HAP-1 (cell line): ENCODE measurements at regions of chr11 and their contacts with region 1.

Region 1: DNA sequence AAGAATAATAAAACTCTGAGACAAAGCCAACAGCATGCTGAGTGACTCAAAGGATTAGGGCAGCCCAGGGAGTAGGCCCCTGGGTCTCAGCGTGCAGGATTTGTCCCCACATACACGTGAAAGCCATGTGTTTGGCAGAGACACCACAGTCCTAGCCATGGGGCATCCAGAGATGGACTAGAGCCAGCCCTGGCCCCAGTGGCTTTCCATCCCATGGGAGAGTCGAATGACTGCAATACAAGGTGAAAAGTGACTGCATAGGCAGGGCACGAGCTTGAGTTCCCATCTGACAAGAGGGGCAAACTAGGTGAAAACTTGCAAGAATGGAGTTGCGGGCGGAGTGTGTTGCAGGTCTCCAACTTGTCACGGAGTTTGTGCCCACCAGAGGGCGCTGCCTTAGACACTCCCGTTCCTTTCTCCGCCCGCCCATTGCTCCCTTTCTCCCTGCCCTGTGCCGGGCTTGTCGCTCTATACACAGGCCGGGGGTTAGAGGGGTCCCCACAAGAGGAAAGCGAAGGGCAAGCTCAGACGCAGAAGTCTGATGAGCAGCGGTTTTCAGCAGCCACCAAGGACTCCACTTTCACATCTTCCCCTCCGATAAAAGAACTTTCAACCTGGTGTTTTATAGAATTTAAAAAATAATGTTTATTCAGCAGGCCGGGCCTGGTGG is 24.2 kb downstream of the TSKU start:
- DNase-seq: peak; percentile 80 to 95
- H3K4me3 ChIP-seq: no peak overlapping the region
- H3K4me1 ChIP-seq: no peaks in the 10 kb centered on the region
- H3K27me3 ChIP-seq: no peaks in the 10 kb centered on the region

Region 2: GRCh38 chr11:76919887-76920746 is 112.8 kb after region 1 on chr11:
- in situ Hi-C with region 1: loop called (anchors 10 kb)
- DNase-seq: peak; percentile 72 to 84
- H3K4me3 ChIP-seq: no peak overlapping the region
- H3K4me1 ChIP-seq: no peaks in the 10 kb centered on the region
- H3K27me3 ChIP-seq: no peaks in the 10 kb centered on the region